Lower leg skin (tissue), 4 donors: ENCODE measurements at regions of chr20 and their contacts with region 1.

Region 1: DNA sequence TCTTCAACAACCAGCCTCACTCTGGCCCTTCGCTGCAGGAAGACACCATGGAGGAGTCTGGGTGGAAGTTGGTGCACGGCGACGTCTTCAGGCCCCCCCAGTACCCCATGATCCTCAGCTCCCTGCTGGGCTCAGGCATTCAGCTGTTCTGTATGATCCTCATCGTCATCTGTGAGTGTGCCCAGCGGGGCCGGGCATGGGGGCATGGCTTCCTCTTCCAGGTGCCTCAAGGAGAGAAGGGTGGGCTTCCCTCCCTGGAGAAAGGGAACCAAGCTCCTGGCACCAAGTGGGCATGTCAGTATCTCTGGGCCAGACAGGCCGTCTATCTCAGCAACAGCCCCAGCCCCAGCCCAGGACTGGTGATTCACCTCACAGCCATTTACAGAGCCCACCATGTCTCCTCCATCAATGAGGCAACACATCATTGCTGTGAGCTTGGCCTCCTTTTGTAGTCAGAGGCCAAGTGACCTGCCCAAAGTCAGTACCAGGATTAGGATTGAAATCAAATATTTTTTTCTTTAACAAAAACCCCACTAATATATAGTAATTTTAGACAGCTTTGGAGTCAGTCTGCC is 40.2 kb downstream of the TM9SF4 start:
- DNase-seq: no peak
- H3K4me3 ChIP-seq: no peak overlapping the region
- CTCF ChIP-seq: no peak
- POLR2A ChIP-seq: no peak

Region 2: GRCh38 chr20:31987744-31988143 is 161.9 kb before region 1 on chr20:
- intact Hi-C with region 1: loop called (anchors 5 kb)
- DNase-seq: no peak
- H3K4me3 ChIP-seq: no peak overlapping the region
- CTCF ChIP-seq: no peak
- POLR2A ChIP-seq: no peak

Region 3: GRCh38 chr20:32908334-32909292 is 758.9 kb after region 1 on chr20:
- intact Hi-C with region 1: no loop called
- DNase-seq: no peak
- H3K4me3 ChIP-seq: no peak overlapping the region
- CTCF ChIP-seq: no peak
- POLR2A ChIP-seq: no peak

Region 4: GRCh38 chr20:33551778-33552177 is 1402.1 kb after region 1 on chr20:
- intact Hi-C with region 1: no loop called
- DNase-seq: no peak
- H3K4me3 ChIP-seq: no peak overlapping the region
- CTCF ChIP-seq: no peak
- POLR2A ChIP-seq: no peak